ENCODE measurements at regions of chr11 and their contacts with region 1.

Region 1: DNA sequence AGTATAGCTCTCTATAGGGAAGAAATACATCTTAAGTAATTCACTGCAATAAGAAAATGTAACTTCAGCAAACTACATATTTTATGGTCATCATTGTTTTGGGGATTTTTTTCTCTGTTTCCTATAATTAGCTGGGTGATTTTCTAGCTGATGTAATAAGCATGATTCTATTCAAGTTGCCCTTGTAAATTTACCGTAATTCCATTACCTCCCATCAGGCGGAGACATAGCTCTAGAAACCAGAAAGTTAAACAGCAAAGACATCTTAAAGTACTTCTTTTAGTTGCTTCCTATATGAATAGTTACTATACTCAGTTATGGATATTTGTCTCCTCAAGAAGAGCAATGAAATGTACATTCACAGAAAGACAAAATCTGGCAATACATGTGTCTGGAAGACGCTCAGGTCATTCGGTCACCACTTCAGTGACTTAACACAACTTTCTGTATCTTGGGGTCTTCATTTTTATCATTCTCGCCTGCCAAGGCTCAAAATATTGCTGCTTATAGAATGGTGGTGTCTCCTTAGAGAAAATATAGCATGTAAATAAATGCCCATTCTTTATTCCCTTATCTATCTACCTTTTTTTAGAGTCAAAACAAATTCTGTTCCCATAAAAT is 239.9 kb upstream of the ZC3H12C start:
- DNase-seq: peak; percentile 88
- ATAC-seq: peak; percentile 57
- H3K4me3 ChIP-seq: no peak overlapping the region
- H3K27ac ChIP-seq: no peak overlapping the region
- H3K4me1 ChIP-seq: peaks cover 12% of the 10 kb centered on the region
- H3K27me3 ChIP-seq: no peaks in the 10 kb centered on the region
- CTCF ChIP-seq: peak; percentile 94

Region 2: GRCh38 chr11:108697872-108698473 is 1155.3 kb before region 1 on chr11:
- CTCF ChIA-PET with region 1: no interaction called
- POLR2A ChIA-PET with region 1: no interaction called
- intact Hi-C with region 1: loop called (anchors 10 kb)
- DNase-seq: peak; percentile 79
- ATAC-seq: peak; percentile 82
- H3K4me3 ChIP-seq: no peak overlapping the region
- H3K27ac ChIP-seq: no peak overlapping the region
- H3K4me1 ChIP-seq: peaks cover 13% of the 10 kb centered on the region
- H3K27me3 ChIP-seq: no peaks in the 10 kb centered on the region
- CTCF ChIP-seq: peak; percentile 96

Region 3: DNA sequence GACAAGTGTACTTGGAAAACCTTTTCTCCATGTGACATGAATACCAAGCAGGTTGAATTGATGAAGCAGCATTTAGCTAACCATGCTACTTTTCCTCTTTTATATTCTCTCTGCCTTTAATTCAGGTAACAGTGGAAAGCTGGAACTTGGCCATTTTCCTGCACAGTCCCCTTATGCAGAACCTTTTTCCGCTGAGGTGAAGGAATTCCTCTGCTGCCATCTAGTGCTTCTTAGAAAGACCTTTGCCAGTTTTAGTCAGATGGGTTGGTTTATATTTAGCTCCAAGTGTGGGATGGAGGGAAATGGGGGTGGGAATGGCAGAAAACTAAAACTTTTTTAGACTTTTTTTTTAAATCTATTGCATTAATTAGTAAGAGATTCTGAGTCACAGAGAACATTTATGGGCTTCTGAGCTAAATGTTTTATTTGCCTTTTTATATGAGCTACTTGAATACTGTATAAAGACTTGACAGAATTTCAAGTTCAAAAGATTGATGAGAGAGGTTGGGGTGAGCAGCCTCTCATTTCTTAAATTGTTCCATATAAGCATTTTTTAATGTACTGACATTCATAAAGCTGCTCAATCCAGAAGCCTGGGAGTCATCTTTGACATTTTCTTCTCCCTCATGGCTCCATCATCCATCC is 86.0 kb after region 1 on chr11:
- CTCF ChIA-PET with region 1: interaction called, 15 read pairs
- POLR2A ChIA-PET with region 1: no interaction called
- intact Hi-C with region 1: loop called (anchors 1 kb)
- DNase-seq: peak; percentile 94
- ATAC-seq: peak; percentile 68
- H3K4me3 ChIP-seq: no peak overlapping the region
- H3K27ac ChIP-seq: peak overlapping the region; percentile 85
- H3K4me1 ChIP-seq: peaks cover 22% of the 10 kb centered on the region
- H3K27me3 ChIP-seq: no peaks in the 10 kb centered on the region
- CTCF ChIP-seq: peak; percentile 97

Region 4: DNA sequence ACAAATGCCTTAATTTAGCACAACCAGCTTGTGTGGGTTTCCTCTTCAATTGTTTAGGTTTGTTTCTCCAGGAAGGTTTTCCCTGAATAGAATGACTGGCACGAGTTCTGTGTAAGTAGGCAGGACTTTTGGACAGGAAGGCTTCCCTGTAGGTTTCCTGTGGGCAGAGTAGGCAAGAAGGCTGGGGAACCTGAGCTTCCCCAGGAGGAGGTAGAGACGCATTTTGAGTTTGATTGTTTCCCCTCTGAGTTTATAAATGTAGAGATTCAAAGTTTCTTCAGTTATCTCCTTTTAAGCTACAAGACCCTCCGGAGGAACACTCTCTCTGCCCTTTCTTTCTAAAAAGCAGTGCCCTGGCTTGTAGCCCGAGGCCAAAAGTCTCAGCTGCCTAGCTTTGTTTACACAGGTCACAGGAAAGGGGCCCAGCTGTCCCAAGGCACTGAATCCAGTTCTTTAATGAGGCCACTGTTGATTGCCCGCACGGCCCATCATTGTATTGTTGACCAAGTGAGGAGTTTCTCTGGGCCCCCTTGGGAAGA is 509.8 kb after region 1 on chr11:
- CTCF ChIA-PET with region 1: no interaction called
- POLR2A ChIA-PET with region 1: no interaction called
- intact Hi-C with region 1: loop called (anchors 2 kb)
- DNase-seq: peak; percentile 72
- ATAC-seq: peak; percentile 94
- H3K4me3 ChIP-seq: peak overlapping the region; percentile 46
- H3K27ac ChIP-seq: peak overlapping the region; percentile 70
- H3K4me1 ChIP-seq: peaks cover 27% of the 10 kb centered on the region
- H3K27me3 ChIP-seq: no peaks in the 10 kb centered on the region
- CTCF ChIP-seq: no peak

Region 5: GRCh38 chr11:110429731-110430266 is 576.5 kb after region 1 on chr11 and contains the start of gene FDX1:
- CTCF ChIA-PET with region 1: no interaction called
- POLR2A ChIA-PET with region 1: no interaction called
- intact Hi-C with region 1: loop called (anchors 2 kb)
- DNase-seq: peak; percentile 81
- ATAC-seq: peak; percentile 84
- H3K4me3 ChIP-seq: peak within 1 kb of the TSS; percentile 78
- H3K27ac ChIP-seq: peak within 1 kb of the TSS; percentile 40
- H3K4me1 ChIP-seq: peaks cover 27% of the 10 kb centered on the region
- H3K27me3 ChIP-seq: no peaks in the 10 kb centered on the region
- CTCF ChIP-seq: peak; percentile 48; the same call in 1 of the 2 replicates
- total RNA-seq, gene FDX1: 14.8 and 16.6 TPM in 2 replicates

Measured in PC-3 (cell line).